ENCODE measurements at regions of chr17 and their contacts with region 1.

Region 1: DNA sequence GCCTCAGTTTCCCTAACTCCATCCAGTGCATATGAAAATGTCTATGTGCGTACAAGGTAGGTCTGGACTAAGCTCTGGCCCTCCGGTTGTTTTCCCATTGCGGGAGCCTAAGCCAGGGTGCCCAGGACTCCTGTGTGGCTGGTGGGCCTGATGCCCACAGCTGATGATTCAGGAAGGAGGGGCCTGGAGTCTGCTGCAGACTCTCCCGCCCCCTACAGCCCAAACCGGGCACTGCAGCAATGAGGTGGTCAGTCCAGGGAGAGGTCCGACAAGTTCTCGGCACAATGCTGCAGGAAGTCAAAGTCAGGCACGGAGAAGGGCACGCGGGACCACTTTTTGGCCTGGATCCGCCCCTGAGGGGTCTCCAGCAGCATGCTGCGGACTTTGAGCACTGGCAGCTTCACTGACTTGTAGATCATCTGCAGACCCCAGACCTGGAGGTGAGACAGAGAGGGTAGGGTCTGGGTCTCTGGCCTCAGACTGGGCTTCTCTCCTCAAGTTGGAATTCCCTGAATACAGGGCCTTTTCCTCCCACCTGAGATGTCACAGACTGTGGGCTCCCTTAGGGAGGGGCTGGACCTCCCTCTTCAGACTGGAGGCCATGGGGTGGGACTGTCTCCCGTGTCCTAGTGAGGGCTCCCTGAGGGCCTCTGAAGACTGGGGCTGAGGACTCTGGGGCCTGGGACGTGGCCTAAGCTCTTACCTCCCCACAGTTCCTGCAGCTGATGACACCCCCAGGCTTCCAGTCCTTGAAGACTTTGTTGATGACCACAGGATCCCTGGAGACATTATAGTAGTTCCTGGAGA is 3.4 kb upstream of the ZNF385C start:
- DNase-seq: peak; percentile 78
- H3K4me3 ChIP-seq: no peak overlapping the region
- H3K27ac ChIP-seq: no peak overlapping the region
- H3K4me1 ChIP-seq: peaks cover 5% of the 10 kb centered on the region
- H3K27me3 ChIP-seq: peaks cover 14 to 15% of the 10 kb centered on the region in 2 experiments
- CTCF ChIP-seq: peak; percentile 96 to 97
- POLR2A ChIP-seq: no peak

Region 2: GRCh38 chr17:42019509-42020404 is 82.0 kb before region 1 on chr17 and contains the start of gene NKIRAS2:
- CTCF ChIA-PET with region 1: interaction called, 40 read pairs
- POLR2A ChIA-PET with region 1: no interaction called
- dilution Hi-C with region 1: no loop called
- intact Hi-C with region 1: loop called (anchors 2 kb)
- DNase-seq: peak; percentile 89
- H3K4me3 ChIP-seq: peak within 1 kb of the TSS; percentile 89 to 96 (median 93)
- H3K27ac ChIP-seq: peak within 1 kb of the TSS; percentile 86
- H3K4me1 ChIP-seq: peaks cover 24% of the 10 kb centered on the region
- H3K27me3 ChIP-seq: no peaks in the 10 kb centered on the region
- CTCF ChIP-seq: peak; percentile 91 to 96
- POLR2A ChIP-seq: peak; percentile 92
- total RNA-seq, gene NKIRAS2: 57.3 and 60.4 TPM in 2 replicates

Region 3: GRCh38 chr17:42055496-42055895 is 46.2 kb before region 1 on chr17:
- CTCF ChIA-PET with region 1: interaction called, 14 read pairs
- POLR2A ChIA-PET with region 1: no interaction called
- dilution Hi-C with region 1: no loop called
- intact Hi-C with region 1: no loop called
- DNase-seq: no peak
- H3K4me3 ChIP-seq: no peak overlapping the region
- H3K27ac ChIP-seq: no peak overlapping the region
- H3K4me1 ChIP-seq: no peaks in the 10 kb centered on the region
- H3K27me3 ChIP-seq: peaks cover 28 to 36% of the 10 kb centered on the region in 2 experiments
- CTCF ChIP-seq: no peak
- POLR2A ChIP-seq: no peak

Region 4: GRCh38 chr17:42072323-42073187 is 29.2 kb before region 1 on chr17:
- CTCF ChIA-PET with region 1: interaction called, 41 read pairs
- POLR2A ChIA-PET with region 1: no interaction called
- dilution Hi-C with region 1: no loop called
- intact Hi-C with region 1: loop called (anchors 1 kb)
- DNase-seq: no peak
- H3K4me3 ChIP-seq: no peak overlapping the region
- H3K27ac ChIP-seq: no peak overlapping the region
- H3K4me1 ChIP-seq: peaks cover 3% of the 10 kb centered on the region
- H3K27me3 ChIP-seq: peaks cover 0 to 12% of the 10 kb centered on the region in 2 experiments
- CTCF ChIP-seq: peak in 1 of 2 donors; percentile 7
- POLR2A ChIP-seq: no peak

Region 5: DNA sequence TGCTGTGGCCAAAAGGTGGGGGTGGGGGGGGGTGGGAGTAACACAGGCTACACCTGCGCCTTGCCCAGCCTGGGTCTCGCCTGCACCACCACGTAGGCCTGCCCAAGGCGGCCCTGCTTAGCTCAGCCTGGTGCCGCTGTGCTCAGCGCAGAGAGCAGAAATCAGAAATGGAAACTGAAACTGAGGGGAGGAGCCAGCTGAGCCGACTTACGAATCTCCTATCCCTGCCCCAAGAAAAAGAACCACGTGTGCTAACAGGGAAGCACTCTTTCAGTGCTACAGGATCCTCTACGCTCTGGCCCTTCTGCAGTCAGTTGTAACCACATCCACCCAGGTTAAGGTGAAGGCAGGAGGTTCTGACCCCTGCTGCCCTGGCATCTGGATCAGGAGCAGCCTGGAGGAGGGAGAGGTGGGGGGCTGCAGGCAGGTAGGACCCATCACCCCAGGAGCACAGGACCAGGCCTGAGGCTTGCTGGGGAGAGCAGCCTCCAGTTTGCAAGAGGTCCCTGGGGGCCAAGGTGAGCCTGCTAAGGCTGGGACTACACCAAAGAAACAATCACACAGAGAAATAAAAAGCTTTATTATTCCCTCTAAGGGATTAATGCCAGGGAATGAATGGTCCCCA is 10.9 kb after region 1 on chr17 and contains the start of gene DHX58:
- CTCF ChIA-PET with region 1: interaction called, 10 read pairs
- POLR2A ChIA-PET with region 1: interaction called, 4 read pairs
- dilution Hi-C with region 1: no loop called
- intact Hi-C with region 1: no loop called
- DNase-seq: peak; percentile 88
- H3K4me3 ChIP-seq: peak within 1 kb of the TSS in 2 of 3 experiments; percentile 29 to 31
- H3K27ac ChIP-seq: peak within 1 kb of the TSS; percentile 5
- H3K4me1 ChIP-seq: peaks cover 9% of the 10 kb centered on the region
- H3K27me3 ChIP-seq: no peaks in the 10 kb centered on the region
- CTCF ChIP-seq: no peak
- POLR2A ChIP-seq: peak; percentile 74
- total RNA-seq, gene DHX58: 3.1 and 6.4 TPM in 2 replicates

Region 6: DNA sequence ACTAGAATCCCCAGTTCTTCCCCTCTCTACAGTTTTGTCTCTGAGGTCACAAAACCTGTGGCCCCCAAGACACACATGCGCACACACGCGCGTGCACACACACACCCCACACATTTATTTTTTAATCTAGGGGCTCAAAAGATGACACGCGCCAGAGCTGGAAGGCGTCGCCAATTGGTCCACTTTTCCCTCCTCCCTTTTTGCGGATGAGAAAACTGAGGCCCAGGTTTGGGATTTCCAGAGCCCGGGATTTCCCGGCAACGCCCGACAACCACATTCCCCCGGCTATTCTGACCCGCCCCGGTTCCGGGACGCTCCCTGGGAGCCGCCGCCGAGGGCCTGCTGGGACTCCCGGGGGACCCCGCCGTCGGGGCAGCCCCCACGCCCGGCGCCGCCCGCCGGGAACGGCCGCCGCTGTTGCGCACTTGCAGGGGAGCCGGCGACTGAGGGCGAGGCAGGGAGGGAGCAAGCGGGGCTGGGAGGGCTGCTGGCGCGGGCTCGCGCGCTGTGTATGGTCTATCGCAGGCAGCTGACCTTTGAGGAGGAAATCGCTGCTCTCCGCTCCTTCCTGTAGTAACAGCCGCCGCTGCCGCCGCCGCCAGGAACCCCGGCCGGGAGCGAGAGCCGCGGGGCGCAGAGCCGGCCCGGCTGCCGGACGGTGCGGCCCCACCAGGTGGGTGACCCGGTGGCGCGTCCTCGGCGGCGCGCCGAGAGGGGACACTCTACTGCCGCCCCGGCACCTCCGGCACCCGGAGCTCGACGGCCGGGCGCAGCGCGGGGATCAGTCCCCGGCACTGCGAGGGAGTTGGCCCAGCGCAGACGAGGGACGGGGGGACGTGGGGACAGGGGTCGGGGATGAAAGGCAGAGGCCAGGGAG is 186.4 kb after region 1 on chr17 and contains the start of gene STAT5A:
- CTCF ChIA-PET with region 1: no interaction called
- POLR2A ChIA-PET with region 1: no interaction called
- dilution Hi-C with region 1: no loop called
- intact Hi-C with region 1: no loop called
- DNase-seq: peak; percentile 88
- H3K4me3 ChIP-seq: peak within 1 kb of the TSS; percentile 23 to 59 (median 30)
- H3K27ac ChIP-seq: peak within 1 kb of the TSS; percentile 42
- H3K4me1 ChIP-seq: peaks cover 14% of the 10 kb centered on the region
- H3K27me3 ChIP-seq: no peaks in the 10 kb centered on the region
- CTCF ChIP-seq: no peak
- POLR2A ChIP-seq: peak; percentile 59
- total RNA-seq, gene STAT5A: 23.4 and 23.6 TPM in 2 replicates